ENCODE measurements at regions of chr12 and their contacts with region 1.

Region 1: DNA sequence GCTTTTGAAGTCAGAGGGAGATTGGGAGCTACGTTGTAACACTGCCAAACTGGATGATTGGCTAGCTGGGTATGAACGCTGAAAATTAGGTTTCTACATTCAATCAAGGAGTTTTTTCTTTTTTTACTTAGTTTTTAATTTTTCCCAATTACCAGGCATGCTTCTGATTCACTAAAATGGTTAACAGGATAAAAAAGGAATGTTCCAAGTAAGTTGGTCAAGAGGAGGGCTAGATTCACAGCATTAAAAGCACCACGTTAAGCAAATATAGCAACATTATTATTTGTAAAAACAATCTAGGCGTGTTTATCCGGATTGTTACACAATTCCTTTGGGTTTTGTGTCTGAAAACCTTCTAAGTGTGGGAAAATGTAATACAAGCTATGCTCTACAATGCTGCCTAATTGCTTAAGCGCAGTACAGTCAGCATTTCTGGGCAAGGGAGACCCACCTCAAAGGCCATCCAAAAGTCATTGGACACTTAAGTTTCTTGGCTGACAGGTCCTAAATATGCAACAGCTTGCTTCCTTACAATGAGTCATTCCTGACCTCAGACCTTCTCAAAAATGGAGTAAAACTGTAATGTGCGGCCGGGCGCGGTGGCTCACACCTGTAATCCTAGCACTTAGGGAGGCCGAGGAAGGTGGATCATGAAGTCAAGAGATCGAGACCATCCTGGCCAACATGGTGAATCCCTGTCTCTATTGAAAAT is 1.2 kb downstream of the RPLP0 start:
- DNase-seq: no peak
- H3K4me3 Mint-ChIP-seq: peak overlapping the region; percentile 98
- H3K27ac Mint-ChIP-seq: peak overlapping the region; percentile 98
- H3K4me1 Mint-ChIP-seq: peaks cover 53% of the 10 kb centered on the region
- H3K27me3 Mint-ChIP-seq: no peaks in the 10 kb centered on the region

Region 2: DNA sequence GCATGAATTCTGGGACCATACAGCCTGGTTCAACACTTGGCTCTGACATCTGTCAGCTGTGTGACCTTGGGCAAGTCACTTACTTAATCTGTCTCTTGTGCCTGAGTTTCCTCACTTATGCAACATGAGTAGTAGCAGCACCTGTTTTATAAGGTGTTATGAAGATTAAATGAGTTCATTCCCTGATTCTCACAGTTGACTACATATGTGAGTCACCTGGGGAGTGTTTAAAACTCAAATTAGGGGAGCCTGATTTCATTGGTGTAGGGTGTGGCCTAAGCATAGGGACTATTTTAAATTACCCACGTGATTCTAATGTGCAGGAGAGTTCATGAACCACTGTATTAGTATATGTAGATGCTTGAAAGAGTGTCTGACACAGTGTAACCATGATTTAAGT is 642.9 kb before region 1 on chr12:
- CTCF ChIA-PET with region 1: no interaction called
- POLR2A ChIA-PET with region 1: no interaction called
- DNase-seq: no peak
- H3K4me3 Mint-ChIP-seq: no peak overlapping the region
- H3K27ac Mint-ChIP-seq: no peak overlapping the region
- H3K4me1 Mint-ChIP-seq: no peaks in the 10 kb centered on the region
- H3K27me3 Mint-ChIP-seq: peaks cover 2% of the 10 kb centered on the region

Region 3: DNA sequence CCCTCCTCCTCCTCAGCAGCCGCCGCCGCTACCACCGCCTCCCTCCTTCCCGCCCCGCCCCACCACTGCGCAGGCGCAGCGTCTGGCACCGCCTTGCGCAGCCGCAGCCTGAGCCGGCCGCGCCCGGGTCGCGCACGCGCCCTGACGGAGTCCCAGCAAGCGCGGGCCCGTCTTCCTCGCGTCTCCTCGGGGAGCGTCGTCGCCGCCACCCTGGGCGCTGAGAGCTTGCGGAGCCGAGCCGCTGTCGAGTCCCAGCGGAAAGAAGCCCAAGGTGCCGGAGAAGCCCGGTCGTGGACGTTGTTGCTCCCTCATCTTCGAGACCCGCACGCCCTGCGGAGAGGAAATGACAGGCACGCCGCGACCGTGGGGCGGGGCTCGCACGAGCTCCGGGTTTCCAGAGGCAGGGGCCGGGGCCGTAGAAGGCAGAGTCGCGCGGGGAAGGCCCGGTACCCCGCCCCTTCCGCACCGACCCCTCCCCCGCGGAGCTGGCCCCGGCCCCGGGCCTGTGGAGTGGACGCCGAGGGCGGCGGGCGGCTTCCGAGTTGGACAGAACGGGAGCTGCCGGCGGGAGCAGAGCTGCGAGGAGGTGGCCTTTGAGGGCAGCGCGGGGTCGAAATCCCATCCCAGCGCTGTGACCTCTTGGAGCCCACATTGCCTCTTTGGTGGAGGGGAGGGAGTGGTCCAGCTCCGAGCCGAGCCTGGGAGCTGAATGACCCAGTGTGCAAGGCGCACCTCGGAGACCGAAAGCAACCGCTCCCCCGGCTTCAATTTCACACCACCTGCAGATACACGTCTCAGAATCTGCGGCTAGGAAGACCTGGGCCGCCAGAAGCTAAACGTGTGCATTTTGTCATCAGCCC is 82.7 kb before region 1 on chr12:
- CTCF ChIA-PET with region 1: interaction called, 9 read pairs
- POLR2A ChIA-PET with region 1: interaction called, 11 read pairs
- DNase-seq: peak; percentile 97
- H3K4me3 Mint-ChIP-seq: peak overlapping the region; percentile 89
- H3K27ac Mint-ChIP-seq: peak overlapping the region; percentile 89
- H3K4me1 Mint-ChIP-seq: peaks cover 77% of the 10 kb centered on the region
- H3K27me3 Mint-ChIP-seq: no peaks in the 10 kb centered on the region

Region 4: GRCh38 chr12:120216742-120217605 is 17.2 kb after region 1 on chr12:
- CTCF ChIA-PET with region 1: interaction called, 17 read pairs
- POLR2A ChIA-PET with region 1: no interaction called
- DNase-seq: no peak
- H3K4me3 Mint-ChIP-seq: no peak overlapping the region
- H3K27ac Mint-ChIP-seq: no peak overlapping the region
- H3K4me1 Mint-ChIP-seq: no peaks in the 10 kb centered on the region
- H3K27me3 Mint-ChIP-seq: no peaks in the 10 kb centered on the region

Region 5: DNA sequence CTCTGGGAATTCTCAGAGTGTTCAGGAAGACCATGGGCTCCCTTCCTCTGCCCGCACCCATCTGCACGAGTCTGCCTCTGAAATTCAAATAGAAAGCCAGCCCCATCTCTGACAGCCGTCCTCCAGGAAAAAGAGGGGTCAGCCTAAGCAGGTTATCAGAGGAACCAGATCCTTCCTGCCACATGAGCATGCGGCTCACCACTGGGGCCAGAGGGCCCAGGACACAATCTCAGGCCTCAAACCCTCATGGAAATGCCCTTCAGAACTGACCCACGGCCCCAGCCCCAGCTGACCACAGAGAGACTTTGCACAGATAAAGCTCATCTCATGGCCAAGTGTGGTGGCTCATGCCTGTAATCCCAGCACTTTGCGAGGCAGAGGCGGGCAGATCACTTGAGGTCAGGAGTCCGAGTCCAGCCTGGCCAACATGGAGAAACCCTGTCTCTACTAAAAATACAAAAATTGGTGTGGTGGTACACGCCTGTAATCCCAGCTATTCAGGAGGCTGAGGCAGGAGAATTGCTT is 42.6 kb after region 1 on chr12:
- CTCF ChIA-PET with region 1: interaction called, 10 read pairs
- POLR2A ChIA-PET with region 1: no interaction called
- DNase-seq: no peak
- H3K4me3 Mint-ChIP-seq: no peak overlapping the region
- H3K27ac Mint-ChIP-seq: no peak overlapping the region
- H3K4me1 Mint-ChIP-seq: peaks cover 70% of the 10 kb centered on the region
- H3K27me3 Mint-ChIP-seq: no peaks in the 10 kb centered on the region

Region 6: GRCh38 chr12:120265473-120266179 is 65.9 kb after region 1 on chr12 and contains the start of gene PXN:
- CTCF ChIA-PET with region 1: interaction called, 34 read pairs
- POLR2A ChIA-PET with region 1: interaction called, 14 read pairs
- DNase-seq: peak; percentile 88
- H3K4me3 Mint-ChIP-seq: peak within 1 kb of the TSS; percentile 88
- H3K27ac Mint-ChIP-seq: peak within 1 kb of the TSS; percentile 83
- H3K4me1 Mint-ChIP-seq: peaks cover 39% of the 10 kb centered on the region
- H3K27me3 Mint-ChIP-seq: no peaks in the 10 kb centered on the region
- total RNA-seq, gene PXN: 201 to 236 TPM

Region 7: DNA sequence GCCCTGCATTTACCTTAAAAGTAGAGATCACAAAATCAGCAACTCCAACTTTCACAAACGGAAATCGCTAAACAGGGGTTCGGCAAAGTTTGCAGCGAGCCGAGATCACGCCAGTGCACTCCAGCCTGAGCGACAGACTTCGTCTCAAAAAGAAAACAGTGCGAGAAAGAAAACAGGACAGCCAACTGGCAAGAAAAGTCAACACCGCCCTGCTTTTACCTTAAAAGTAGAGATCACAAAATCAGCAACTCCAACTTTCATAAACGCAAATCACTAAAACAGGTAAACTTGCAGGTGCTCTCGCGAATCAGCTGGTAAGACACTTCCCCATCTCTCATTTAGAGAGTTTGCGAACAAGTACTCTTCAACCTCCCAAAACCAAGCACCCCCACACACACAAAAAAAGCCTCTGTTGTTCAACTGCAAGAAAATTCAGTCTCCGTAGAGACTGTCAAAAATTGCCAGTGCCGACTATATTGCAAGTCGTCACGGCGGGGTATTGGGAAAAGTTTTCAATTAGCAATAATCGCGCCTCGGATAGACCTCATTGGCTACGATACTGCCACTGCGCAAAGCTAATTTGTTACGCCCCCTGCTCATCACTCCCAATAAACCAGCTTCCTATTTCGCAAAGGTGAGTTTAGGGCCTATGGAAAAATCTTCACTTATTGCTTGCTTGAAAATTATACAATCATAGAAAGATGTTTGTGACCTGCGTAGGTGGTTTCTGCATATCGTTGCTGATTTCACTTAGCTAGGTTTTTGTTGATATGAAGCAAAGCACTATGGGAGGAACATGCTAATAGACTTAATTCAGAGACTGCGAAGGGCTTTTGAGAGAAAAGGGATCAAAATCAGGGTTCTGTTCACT is 93.1 kb after region 1 on chr12 and contains the start of gene RNU4-1:
- CTCF ChIA-PET with region 1: interaction called, 26 read pairs
- POLR2A ChIA-PET with region 1: interaction called, 41 read pairs
- DNase-seq: peak; percentile 86
- H3K4me3 Mint-ChIP-seq: no peak within 1 kb of the TSS
- H3K27ac Mint-ChIP-seq: no peak within 1 kb of the TSS
- H3K4me1 Mint-ChIP-seq: peaks cover 12% of the 10 kb centered on the region
- H3K27me3 Mint-ChIP-seq: peaks cover 6% of the 10 kb centered on the region
- total RNA-seq, gene RNU4-1: 672 to 1,846 TPM

Region 8: GRCh38 chr12:120381752-120382419 is 182.1 kb after region 1 on chr12:
- CTCF ChIA-PET with region 1: no interaction called
- POLR2A ChIA-PET with region 1: no interaction called
- DNase-seq: no peak
- H3K4me3 Mint-ChIP-seq: no peak overlapping the region
- H3K27ac Mint-ChIP-seq: no peak overlapping the region
- H3K4me1 Mint-ChIP-seq: no peaks in the 10 kb centered on the region
- H3K27me3 Mint-ChIP-seq: peaks cover 22% of the 10 kb centered on the region

Measured in activated CD4-positive, alpha-beta T cell treated with anti-CD3 and anti-CD28 coated beads, Interleukin-2, amount 10 ng/mL, durations not matched to agents 7 days and 5 days (primary cell).